Activated CD4-positive, alpha-beta T cell treated with anti-CD3 and anti-CD28 coated beads for 36 hours (primary cell): ENCODE measurements at regions of chr7 and their contacts with region 1.

Region 1: DNA sequence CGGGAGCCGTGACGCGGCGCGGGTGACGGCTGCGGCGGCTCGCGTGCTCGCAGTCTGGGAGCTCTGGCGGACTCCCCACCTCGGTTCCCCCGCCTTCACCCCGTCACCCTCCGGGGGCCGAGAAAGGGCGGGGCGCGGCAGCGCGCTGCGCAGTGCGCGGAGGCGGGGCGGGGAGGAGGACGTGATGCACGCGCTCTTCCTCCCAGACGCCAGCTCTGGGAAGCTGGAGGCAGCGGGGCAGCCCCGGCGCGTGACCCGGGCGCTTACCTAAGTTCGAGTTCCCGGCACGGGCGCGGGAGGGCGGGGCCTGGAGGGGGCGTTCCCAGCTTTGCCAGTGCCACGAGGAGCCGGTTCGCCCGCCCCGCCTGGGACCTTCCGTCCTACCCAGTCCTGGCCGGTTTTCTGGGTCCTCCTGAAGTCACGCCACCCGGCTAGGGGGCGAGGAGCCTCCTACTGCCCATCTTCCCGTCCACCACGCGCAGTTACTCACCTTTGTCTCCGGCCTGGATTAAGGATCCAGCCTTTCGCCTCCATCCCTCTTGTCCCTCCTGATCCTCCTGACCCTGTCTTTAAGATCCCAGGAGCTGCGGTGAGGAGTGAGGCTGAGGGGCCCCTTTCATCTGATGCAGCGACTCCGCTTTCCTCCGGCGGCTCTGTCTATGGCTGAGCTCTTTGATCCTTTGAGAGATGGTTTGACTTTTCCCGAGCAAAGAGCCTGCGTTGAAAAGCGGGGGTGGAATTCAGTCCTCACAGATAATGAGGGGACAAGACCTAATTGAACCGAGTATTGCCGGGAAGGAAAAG is 470 bp upstream of the NAMPT start:
- DNase-seq: peak; percentile 100
- ATAC-seq: peak; percentile 80
- H3K4me3 Mint-ChIP-seq: peak overlapping the region; percentile 94
- H3K27ac Mint-ChIP-seq: peak overlapping the region; percentile 99
- H3K4me1 Mint-ChIP-seq: peaks cover 45% of the 10 kb centered on the region
- H3K27me3 Mint-ChIP-seq: no peaks in the 10 kb centered on the region

Region 2: GRCh38 chr7:104943502-104944343 is 1341.5 kb before region 1 on chr7:
- CTCF ChIA-PET with region 1: no interaction called
- POLR2A ChIA-PET with region 1: interaction called, 3 read pairs
- intact Hi-C with region 1: loop called in 1 of 2 experiments (anchors 5 kb)
- DNase-seq: peak; percentile 87
- ATAC-seq: peak; percentile 68
- H3K4me3 Mint-ChIP-seq: peak overlapping the region; percentile 95
- H3K27ac Mint-ChIP-seq: peak overlapping the region; percentile 99
- H3K4me1 Mint-ChIP-seq: peaks cover 68% of the 10 kb centered on the region
- H3K27me3 Mint-ChIP-seq: no peaks in the 10 kb centered on the region

Region 3: GRCh38 chr7:106270122-106270977 is 14.9 kb before region 1 on chr7:
- CTCF ChIA-PET with region 1: interaction called, 11 read pairs
- POLR2A ChIA-PET with region 1: interaction called, 11 read pairs
- intact Hi-C with region 1: no loop called
- DNase-seq: no peak
- ATAC-seq: peak; percentile 16
- H3K4me3 Mint-ChIP-seq: no peak overlapping the region
- H3K27ac Mint-ChIP-seq: peak overlapping the region; percentile 56
- H3K4me1 Mint-ChIP-seq: peaks cover 27% of the 10 kb centered on the region
- H3K27me3 Mint-ChIP-seq: no peaks in the 10 kb centered on the region

Region 4: GRCh38 chr7:106405697-106406141 is 120.5 kb after region 1 on chr7:
- CTCF ChIA-PET with region 1: no interaction called
- POLR2A ChIA-PET with region 1: interaction called, 17 read pairs
- intact Hi-C with region 1: loop called (anchors 1 to 5 kb)
- DNase-seq: peak; percentile 39
- ATAC-seq: peak; percentile 98
- H3K4me3 Mint-ChIP-seq: peak overlapping the region; percentile 8
- H3K27ac Mint-ChIP-seq: peak overlapping the region; percentile 55
- H3K4me1 Mint-ChIP-seq: peaks cover 38% of the 10 kb centered on the region
- H3K27me3 Mint-ChIP-seq: peaks cover 35% of the 10 kb centered on the region

Region 5: DNA sequence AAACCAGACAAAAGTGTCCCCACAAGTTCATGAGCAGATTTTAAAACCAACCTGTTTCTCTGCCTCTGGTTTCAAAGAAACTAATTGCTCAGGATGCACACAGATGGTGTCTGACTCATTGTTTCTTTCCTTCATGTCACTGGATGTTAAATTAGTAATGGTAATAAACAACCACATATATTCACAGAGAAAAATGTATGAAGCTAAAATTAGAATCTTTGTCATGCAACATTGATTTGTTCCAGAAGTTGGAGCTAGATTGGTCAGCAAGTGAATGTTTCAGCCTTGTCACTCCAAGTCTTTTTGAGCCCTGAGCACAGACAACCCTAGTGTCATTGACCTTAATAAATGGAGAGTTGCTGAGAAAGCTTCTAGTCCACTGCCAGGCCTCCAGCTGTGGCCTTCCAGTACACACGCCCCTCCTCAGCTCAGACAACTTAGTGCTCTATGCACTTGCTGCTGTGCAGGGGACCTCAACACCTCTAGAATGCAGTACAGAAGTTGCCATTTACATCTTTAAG is 199.8 kb after region 1 on chr7:
- CTCF ChIA-PET with region 1: no interaction called
- POLR2A ChIA-PET with region 1: interaction called, 16 read pairs
- intact Hi-C with region 1: loop called (anchors 1 to 5 kb)
- DNase-seq: no peak
- ATAC-seq: peak; percentile 73
- H3K4me3 Mint-ChIP-seq: no peak overlapping the region
- H3K27ac Mint-ChIP-seq: peak overlapping the region; percentile 80
- H3K4me1 Mint-ChIP-seq: peaks cover 60% of the 10 kb centered on the region
- H3K27me3 Mint-ChIP-seq: peaks cover 10% of the 10 kb centered on the region

Region 6: GRCh38 chr7:107563775-107564552 is 1278.7 kb after region 1 on chr7 and contains the starts of genes COG5 and DUS4L:
- CTCF ChIA-PET with region 1: no interaction called
- POLR2A ChIA-PET with region 1: no interaction called
- intact Hi-C with region 1: loop called in 1 of 2 experiments (anchors 5 kb)
- DNase-seq: peak; percentile 92
- ATAC-seq: peak; percentile 88
- H3K4me3 Mint-ChIP-seq: peak within 1 kb of the TSS; percentile 85
- H3K27ac Mint-ChIP-seq: peak within 1 kb of the TSS; percentile 94
- H3K4me1 Mint-ChIP-seq: peaks cover 62% of the 10 kb centered on the region
- H3K27me3 Mint-ChIP-seq: no peaks in the 10 kb centered on the region
- total RNA-seq, gene COG5: 34.1 to 35.5 TPM
- total RNA-seq, gene DUS4L: 12.8 to 13.3 TPM